Activated CD8-positive, alpha-beta T cell treated with anti-CD3 and anti-CD28 coated beads, Interleukin-2, amount 10 ng/mL, durations not matched to agents 7 days and 5 days (primary cell): ENCODE measurements at regions of chr9 and their contacts with region 1.

Region 1: GRCh38 chr9:2053883-2054845 is 39.0 kb downstream of the SMARCA2 start:
- DNase-seq: peak; percentile 88
- ATAC-seq: peak; percentile 98
- H3K4me3 Mint-ChIP-seq: peak overlapping the region; percentile 51
- H3K27ac Mint-ChIP-seq: peak overlapping the region; percentile 90
- H3K4me1 Mint-ChIP-seq: peaks cover 40% of the 10 kb centered on the region
- H3K27me3 Mint-ChIP-seq: no peaks in the 10 kb centered on the region

Region 2: GRCh38 chr9:2087500-2088313 is 33.5 kb after region 1 on chr9:
- CTCF ChIA-PET with region 1: interaction called, 13 read pairs
- POLR2A ChIA-PET with region 1: no interaction called
- DNase-seq: peak; percentile 33
- ATAC-seq: peak; percentile 86
- H3K4me3 Mint-ChIP-seq: no peak overlapping the region
- H3K27ac Mint-ChIP-seq: no peak overlapping the region
- H3K4me1 Mint-ChIP-seq: peaks cover 19% of the 10 kb centered on the region
- H3K27me3 Mint-ChIP-seq: no peaks in the 10 kb centered on the region